Breast epithelium (tissue), 4 donors: ENCODE measurements at regions of chr5 and their contacts with region 1.

Region 1: GRCh38 chr5:132729896-132730295 is 7.5 kb downstream of the KIF3A start:
- DNase-seq: no peak
- H3K4me3 ChIP-seq: no peak overlapping the region
- H3K27ac ChIP-seq: no peak overlapping the region
- H3K4me1 ChIP-seq: no peaks in the 10 kb centered on the region
- H3K27me3 ChIP-seq: no peaks in the 10 kb centered on the region
- CTCF ChIP-seq: no peak
- POLR2A ChIP-seq: no peak

Region 2: DNA sequence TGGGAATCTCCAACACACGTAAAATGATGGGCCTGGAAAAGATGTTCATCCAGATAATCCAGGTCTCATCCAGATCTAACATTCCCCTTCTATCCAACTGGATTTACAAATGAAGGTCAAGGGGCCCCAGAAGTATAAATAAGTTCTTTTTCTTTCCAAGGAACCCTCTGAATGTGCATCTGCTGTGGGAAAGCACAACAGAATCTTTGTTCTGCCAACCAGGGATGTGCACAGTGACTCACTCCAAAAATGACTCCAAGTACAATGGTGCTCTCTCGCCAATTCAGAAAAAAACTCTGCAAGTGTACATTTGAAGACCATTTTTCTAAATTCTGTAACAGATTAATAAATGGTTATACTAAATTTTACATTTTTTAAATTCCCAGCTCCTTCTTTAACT is 1107.3 kb before region 1 on chr5:
- intact Hi-C with region 1: no loop called
- DNase-seq: no peak
- H3K4me3 ChIP-seq: no peak overlapping the region
- H3K27ac ChIP-seq: no peak overlapping the region
- H3K4me1 ChIP-seq: no peaks in the 10 kb centered on the region
- H3K27me3 ChIP-seq: no peaks in the 10 kb centered on the region
- CTCF ChIP-seq: no peak
- POLR2A ChIP-seq: no peak

Region 3: GRCh38 chr5:133895979-133896845 is 1166.3 kb after region 1 on chr5:
- intact Hi-C with region 1: loop called (anchors 5 kb)
- DNase-seq: no peak
- H3K4me3 ChIP-seq: no peak overlapping the region
- H3K27ac ChIP-seq: no peak overlapping the region
- H3K4me1 ChIP-seq: no peaks in the 10 kb centered on the region
- H3K27me3 ChIP-seq: no peaks in the 10 kb centered on the region
- CTCF ChIP-seq: no peak
- POLR2A ChIP-seq: no peak